ENCODE measurements at regions of chr18 and their contacts with region 1.

Region 1: DNA sequence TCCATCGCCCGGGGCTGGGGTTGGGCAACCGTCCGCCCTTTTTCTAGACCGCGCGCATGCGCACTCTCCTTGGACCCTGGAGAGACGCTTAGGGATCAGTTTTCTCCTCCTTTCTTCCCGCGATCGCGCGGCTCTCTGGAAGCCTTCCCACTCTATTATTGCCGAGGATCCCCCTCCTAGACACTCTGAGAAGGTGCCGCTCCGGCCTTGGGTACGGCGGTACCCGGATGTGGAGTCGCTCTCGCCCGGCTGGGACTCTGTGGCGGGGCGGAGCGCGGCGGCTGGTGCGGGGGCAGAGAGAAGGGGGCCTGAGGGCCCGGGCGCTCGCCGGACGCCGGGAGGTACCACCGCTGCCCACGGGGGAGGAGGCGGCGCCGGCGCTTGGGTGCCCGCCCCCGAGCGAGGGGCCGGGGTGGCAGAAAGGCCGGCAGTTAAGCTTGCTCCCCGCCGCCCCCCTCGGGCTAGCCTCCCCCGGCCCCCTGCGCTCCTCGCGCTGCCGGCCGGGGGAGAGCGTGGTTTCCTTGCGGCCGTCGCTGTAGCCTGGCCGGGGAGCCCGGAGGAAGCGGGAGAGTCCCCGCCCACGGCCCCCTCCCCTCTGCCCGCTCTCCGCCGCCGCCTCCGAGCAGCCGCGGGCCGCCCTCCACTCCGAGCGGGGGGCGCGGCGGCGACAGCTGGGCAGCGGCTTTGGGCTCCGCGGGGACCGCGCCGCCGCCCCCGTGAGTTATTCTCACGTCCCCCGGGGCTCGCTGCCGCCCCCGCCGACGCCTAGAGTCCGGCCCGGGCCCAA is at the start of gene MIB1:
- DNase-seq: no peak
- H3K4me3 Mint-ChIP-seq: peak within 1 kb of the TSS; percentile 95
- H3K27ac Mint-ChIP-seq: peak within 1 kb of the TSS; percentile 96
- H3K4me1 Mint-ChIP-seq: peaks cover 39% of the 10 kb centered on the region
- H3K27me3 Mint-ChIP-seq: peaks cover 2% of the 10 kb centered on the region
- total RNA-seq, gene MIB1: 40.8 to 43.5 TPM

Region 2: DNA sequence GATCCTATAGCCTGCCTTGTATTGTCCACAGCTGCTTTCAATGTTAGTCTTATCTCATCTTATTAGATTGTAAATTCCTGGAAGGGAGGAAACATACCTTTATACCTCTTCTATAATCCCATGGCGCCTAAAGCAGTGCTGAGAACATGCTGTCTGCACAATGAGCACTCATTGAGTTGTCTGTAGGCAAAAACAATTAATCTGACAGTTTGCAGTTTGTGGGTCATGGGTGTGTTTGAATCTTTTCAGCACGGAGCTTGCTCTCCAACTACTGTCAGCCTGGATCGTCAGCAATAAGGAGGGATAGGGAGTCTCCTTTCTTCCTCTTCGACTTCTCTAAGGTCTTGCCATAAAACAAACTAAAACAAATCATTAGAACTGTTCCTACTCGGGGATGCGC is 525.4 kb before region 1 on chr18:
- CTCF ChIA-PET with region 1: no interaction called
- POLR2A ChIA-PET with region 1: no interaction called
- intact Hi-C with region 1: no loop called
- DNase-seq: no peak
- H3K4me3 Mint-ChIP-seq: no peak overlapping the region
- H3K27ac Mint-ChIP-seq: no peak overlapping the region
- H3K4me1 Mint-ChIP-seq: no peaks in the 10 kb centered on the region
- H3K27me3 Mint-ChIP-seq: no peaks in the 10 kb centered on the region

Region 3: DNA sequence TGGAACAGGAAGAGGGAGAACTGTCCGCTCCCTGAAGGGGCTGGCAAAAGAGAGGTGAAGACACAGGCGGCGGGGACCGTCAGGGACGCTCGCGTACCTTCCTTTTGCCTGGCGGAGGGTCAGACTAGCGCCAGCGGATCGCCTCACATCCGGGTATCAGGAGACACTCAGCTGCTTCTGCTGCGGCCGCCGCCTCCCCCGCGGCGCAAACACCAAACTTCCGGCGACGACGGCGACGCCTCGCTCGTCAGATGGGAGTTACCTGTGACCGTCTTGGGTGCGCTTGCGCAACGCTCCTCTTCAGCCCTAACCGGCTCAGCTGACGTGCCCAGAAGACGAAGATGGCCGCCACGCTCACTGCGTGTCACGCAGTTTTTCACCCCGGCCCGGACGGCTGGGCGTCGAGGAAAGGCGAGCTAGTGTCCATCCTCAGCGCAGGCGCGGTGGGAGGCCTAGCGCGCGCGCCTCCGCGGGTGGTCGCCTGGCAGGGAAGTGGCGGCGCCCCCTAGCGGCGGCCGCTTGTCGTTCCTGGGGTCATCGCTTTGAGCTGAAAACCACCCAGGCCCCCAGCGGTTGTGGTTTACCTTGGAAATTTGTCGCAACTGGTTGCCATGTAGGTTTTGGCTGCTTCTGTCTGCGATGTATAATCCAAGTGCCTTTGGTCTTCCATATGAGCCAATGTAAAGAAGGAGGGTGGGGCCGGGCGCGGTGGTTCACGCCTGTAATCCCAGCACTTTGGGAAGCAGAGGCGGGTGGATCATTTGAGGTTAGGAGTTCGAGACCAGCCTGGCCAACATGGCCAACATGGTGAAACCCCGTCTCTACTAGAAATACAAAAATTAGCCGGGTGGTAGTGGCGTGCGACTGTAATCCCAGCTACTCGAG is 140.1 kb before region 1 on chr18 and contains the start of gene ESCO1:
- CTCF ChIA-PET with region 1: interaction called, 28 read pairs
- POLR2A ChIA-PET with region 1: interaction called, 6 read pairs
- intact Hi-C with region 1: loop called (anchors 1 kb)
- DNase-seq: peak; percentile 97
- H3K4me3 Mint-ChIP-seq: peak within 1 kb of the TSS; percentile 93
- H3K27ac Mint-ChIP-seq: peak within 1 kb of the TSS; percentile 97
- H3K4me1 Mint-ChIP-seq: peaks cover 23% of the 10 kb centered on the region
- H3K27me3 Mint-ChIP-seq: no peaks in the 10 kb centered on the region
- total RNA-seq, gene ESCO1: 18.6 to 22.0 TPM

Region 4: DNA sequence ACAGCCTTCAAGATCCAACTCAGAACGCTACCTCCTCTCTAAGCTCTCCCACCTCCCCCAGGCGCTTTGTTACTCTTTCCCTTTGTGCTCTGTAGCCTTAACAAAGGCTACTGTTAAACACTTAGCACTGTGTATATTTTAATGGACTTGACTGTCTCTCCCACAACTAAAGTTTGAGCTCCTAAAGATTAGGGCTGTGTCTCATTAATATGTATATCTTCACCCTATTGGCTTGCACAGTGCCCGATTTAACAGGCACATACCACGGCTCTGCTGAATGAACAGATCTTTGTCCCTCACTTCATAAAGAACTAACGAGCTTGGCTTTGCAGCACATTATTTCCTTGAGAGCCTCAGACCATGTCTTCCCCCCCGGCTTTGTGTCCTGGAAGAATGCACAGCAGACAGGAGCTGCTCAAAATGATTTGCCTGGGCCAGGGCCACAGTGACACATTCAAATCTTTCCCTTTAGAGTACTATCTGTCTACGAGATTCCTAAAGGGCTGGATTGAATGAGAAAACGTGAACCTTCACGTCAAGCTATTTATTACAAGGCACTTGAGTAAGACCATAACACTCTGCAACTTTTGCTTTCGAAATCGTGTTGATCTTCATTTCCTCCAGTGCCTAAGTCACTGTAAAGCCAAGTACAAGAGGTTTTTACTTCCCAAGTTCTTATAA is 58.4 kb before region 1 on chr18:
- CTCF ChIA-PET with region 1: interaction called, 5 read pairs
- POLR2A ChIA-PET with region 1: no interaction called
- intact Hi-C with region 1: loop called (anchors 1 kb)
- DNase-seq: peak; percentile 36
- H3K4me3 Mint-ChIP-seq: no peak overlapping the region
- H3K27ac Mint-ChIP-seq: no peak overlapping the region
- H3K4me1 Mint-ChIP-seq: peaks cover 25% of the 10 kb centered on the region
- H3K27me3 Mint-ChIP-seq: no peaks in the 10 kb centered on the region

Region 5: DNA sequence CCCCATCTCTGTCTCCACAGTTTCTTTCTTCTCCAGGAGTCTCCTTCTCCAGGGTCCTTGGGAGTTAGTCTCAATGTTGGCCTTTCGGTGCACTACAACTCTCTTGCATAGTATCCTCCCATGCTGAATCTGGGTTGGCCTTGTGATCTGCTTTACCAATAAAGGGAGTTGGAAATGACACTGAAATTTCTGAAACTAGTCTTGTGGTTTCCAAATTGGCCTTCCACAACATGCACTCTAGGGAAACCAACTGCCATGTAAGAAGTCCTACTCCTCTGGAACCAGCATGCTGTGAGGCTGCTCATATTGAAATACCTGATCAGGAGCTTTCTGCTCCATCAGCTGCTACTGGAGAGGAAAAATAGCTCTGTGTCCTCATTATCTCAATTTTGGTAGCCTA is 26.4 kb before region 1 on chr18:
- CTCF ChIA-PET with region 1: no interaction called
- POLR2A ChIA-PET with region 1: no interaction called
- intact Hi-C with region 1: no loop called
- DNase-seq: no peak
- H3K4me3 Mint-ChIP-seq: no peak overlapping the region
- H3K27ac Mint-ChIP-seq: no peak overlapping the region
- H3K4me1 Mint-ChIP-seq: peaks cover 3% of the 10 kb centered on the region
- H3K27me3 Mint-ChIP-seq: no peaks in the 10 kb centered on the region

Region 6: DNA sequence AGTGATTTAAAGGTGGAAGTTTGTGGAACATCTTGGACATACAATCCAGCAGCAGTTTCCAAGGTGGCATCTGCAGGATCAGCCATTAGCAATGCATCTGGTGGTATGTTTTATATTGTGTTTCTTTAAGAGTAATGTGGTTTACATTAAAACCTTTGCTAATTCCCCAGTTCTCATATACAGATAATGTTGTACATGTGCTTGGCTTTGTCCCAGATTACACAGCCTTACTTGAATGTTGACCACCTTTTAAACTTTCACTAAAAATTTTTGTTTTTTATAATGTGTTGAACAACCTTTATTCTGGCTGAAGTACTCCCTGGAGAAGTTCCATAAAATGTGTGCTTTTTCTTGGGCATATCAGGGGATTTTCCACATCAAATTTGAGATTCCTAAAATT is 57.2 kb after region 1 on chr18:
- CTCF ChIA-PET with region 1: no interaction called
- POLR2A ChIA-PET with region 1: no interaction called
- intact Hi-C with region 1: no loop called
- DNase-seq: no peak
- H3K4me3 Mint-ChIP-seq: no peak overlapping the region
- H3K27ac Mint-ChIP-seq: no peak overlapping the region
- H3K4me1 Mint-ChIP-seq: no peaks in the 10 kb centered on the region
- H3K27me3 Mint-ChIP-seq: no peaks in the 10 kb centered on the region

Region 7: GRCh38 chr18:23437357-23438045 is 1696.6 kb after region 1 on chr18:
- CTCF ChIA-PET with region 1: no interaction called
- POLR2A ChIA-PET with region 1: no interaction called
- intact Hi-C with region 1: loop called (anchors 10 kb)
- DNase-seq: peak; percentile 87
- H3K4me3 Mint-ChIP-seq: peak overlapping the region; percentile 90
- H3K27ac Mint-ChIP-seq: peak overlapping the region; percentile 18
- H3K4me1 Mint-ChIP-seq: peaks cover 17% of the 10 kb centered on the region
- H3K27me3 Mint-ChIP-seq: peaks cover 2% of the 10 kb centered on the region

Measured in activated CD4-positive, alpha-beta memory T cell treated with anti-CD3 and anti-CD28 coated beads for 36 hours (primary cell).